Posterior vena cava (tissue), 2 donors: ENCODE measurements at regions of chr14 and their contacts with region 1.

Region 1: GRCh38 chr14:55927028-55927427 is 191.2 kb upstream of the PELI2 start:
- DNase-seq: no peak

Region 2: DNA sequence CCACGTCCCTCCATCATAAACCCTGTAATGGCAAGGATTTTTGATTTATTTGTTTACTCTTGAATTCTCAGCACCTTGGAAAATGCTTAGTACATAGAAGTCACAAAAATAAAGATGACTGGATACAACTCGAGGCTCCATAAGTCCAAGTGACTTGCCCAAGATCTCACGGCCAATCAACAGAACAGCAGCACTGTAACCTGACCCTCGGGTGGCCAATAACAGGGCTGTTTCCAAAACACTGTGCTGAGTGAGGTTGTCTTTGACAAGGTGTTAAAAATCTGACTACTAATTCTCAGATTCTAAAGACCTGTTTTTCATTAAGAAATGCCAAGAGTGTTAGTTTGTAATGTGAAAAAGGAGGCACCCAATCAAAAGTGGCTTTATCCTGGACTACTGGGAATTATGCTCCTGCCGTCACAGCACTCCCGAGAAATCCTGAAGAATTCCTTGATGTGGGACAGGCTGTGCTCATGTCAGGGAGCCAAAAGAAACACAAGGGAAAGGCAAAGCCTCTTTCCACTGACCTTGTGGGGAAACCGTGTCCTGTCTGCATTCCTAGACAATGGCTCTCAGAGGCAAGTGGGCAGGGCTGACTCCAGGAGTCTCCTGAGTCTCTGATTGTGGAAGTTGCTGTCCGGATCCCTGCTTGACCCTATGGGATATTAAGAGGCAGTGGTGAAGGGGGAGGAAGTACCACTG is 13.6 kb before region 1 on chr14:
- intact Hi-C with region 1: loop called in 1 of 2 experiments (anchors 1 kb)
- DNase-seq: peak; percentile 86

Region 3: GRCh38 chr14:55944757-55945156 is 17.7 kb after region 1 on chr14:
- intact Hi-C with region 1: loop called in 1 of 2 experiments (anchors 1 kb)
- DNase-seq: no peak